Activated CD4-positive, alpha-beta T cell treated with anti-CD3 and anti-CD28 coated beads for 36 hours (primary cell): ENCODE measurements at regions of chr2 and their contacts with region 1.

Region 1: DNA sequence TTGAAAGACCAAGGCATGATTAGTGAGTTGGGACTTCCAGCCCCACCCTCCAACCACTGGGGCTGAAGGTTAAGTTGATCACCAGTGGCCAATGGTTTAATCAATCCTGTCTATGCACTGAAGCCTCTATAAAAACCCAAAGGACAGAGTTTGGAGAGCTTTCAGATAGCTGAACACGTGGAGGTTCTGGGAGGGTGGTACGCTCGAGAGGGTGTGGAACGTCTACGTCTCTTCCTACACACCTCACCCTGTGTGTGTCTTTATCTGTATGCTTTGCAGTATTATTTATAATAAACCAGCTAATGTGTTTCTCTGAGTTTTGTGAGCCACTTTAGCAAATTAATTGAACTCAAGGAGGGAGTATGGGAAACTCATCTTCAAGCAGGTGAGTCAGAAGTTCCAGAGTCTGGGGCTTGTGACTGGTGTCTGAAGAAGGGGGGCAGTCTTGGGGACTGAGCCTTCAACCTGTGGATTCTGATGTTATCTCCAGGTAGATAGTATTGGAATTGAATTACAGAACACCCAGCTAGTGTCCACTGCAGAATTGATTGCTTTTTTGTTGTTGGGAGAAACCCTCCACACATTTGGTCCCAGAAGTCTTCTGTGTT is 20.3 kb downstream of the ACTR3 start:
- DNase-seq: peak; percentile 87
- ATAC-seq: peak; percentile 88
- H3K4me3 Mint-ChIP-seq: peak overlapping the region; percentile 2
- H3K27ac Mint-ChIP-seq: peak overlapping the region; percentile 84
- H3K4me1 Mint-ChIP-seq: peaks cover 83% of the 10 kb centered on the region
- H3K27me3 Mint-ChIP-seq: no peaks in the 10 kb centered on the region

Region 2: DNA sequence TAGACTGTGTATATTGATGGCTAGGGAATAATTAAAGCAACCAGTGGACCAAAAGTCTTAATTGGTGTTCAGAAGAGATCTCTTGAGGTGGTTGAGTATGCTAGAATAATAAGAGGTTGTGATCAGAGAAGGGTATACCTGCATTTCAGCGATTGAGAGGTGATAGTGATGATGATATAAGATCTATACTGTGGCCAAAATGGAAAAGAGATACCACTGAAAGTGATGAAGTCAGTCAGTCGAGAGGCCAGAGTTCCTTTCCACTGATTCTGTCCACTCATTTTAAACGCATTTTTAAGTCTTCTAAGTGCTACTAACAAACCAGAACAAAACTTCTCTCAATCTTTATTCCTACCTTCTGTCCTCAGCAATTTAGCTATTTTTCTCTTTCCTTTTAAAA is 12.6 kb after region 1 on chr2:
- CTCF ChIA-PET with region 1: interaction called, 3 read pairs
- POLR2A ChIA-PET with region 1: no interaction called
- intact Hi-C with region 1: loop called (anchors 1 to 2 kb)
- DNase-seq: no peak
- ATAC-seq: no peak
- H3K4me3 Mint-ChIP-seq: no peak overlapping the region
- H3K27ac Mint-ChIP-seq: no peak overlapping the region
- H3K4me1 Mint-ChIP-seq: peaks cover 20% of the 10 kb centered on the region
- H3K27me3 Mint-ChIP-seq: no peaks in the 10 kb centered on the region

Region 3: DNA sequence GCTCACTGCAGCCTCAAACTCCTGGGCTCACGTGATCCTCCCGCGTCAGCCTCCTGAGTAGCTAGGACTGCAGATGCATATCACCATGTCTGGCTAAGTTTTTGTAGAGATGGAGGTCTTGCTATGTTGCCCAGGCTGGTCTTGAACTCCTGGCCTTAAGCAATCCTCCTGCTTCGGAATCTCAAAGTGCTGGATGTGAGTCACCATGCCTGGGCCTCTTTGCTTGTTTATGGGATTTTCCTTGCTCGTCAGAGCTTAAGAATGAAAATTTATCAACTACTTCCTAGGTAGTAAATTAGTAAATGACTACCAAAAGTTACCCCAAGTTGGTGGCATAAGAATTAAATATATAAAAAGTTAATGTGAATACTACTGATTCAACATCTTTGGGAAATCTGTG is 30.7 kb after region 1 on chr2:
- CTCF ChIA-PET with region 1: interaction called, 3 read pairs
- POLR2A ChIA-PET with region 1: no interaction called
- intact Hi-C with region 1: loop called in 1 of 2 experiments (anchors 5 kb)
- DNase-seq: no peak
- ATAC-seq: no peak
- H3K4me3 Mint-ChIP-seq: no peak overlapping the region
- H3K27ac Mint-ChIP-seq: no peak overlapping the region
- H3K4me1 Mint-ChIP-seq: no peaks in the 10 kb centered on the region
- H3K27me3 Mint-ChIP-seq: no peaks in the 10 kb centered on the region

Region 4: GRCh38 chr2:114160263-114160981 is 250.2 kb after region 1 on chr2:
- CTCF ChIA-PET with region 1: no interaction called
- POLR2A ChIA-PET with region 1: no interaction called
- intact Hi-C with region 1: no loop called
- DNase-seq: no peak
- ATAC-seq: no peak
- H3K4me3 Mint-ChIP-seq: no peak overlapping the region
- H3K27ac Mint-ChIP-seq: no peak overlapping the region
- H3K4me1 Mint-ChIP-seq: no peaks in the 10 kb centered on the region
- H3K27me3 Mint-ChIP-seq: peaks cover 7% of the 10 kb centered on the region